CD8-positive, alpha-beta T cell (primary cell): ENCODE measurements at regions of chr17 and their contacts with region 1.

Region 1: DNA sequence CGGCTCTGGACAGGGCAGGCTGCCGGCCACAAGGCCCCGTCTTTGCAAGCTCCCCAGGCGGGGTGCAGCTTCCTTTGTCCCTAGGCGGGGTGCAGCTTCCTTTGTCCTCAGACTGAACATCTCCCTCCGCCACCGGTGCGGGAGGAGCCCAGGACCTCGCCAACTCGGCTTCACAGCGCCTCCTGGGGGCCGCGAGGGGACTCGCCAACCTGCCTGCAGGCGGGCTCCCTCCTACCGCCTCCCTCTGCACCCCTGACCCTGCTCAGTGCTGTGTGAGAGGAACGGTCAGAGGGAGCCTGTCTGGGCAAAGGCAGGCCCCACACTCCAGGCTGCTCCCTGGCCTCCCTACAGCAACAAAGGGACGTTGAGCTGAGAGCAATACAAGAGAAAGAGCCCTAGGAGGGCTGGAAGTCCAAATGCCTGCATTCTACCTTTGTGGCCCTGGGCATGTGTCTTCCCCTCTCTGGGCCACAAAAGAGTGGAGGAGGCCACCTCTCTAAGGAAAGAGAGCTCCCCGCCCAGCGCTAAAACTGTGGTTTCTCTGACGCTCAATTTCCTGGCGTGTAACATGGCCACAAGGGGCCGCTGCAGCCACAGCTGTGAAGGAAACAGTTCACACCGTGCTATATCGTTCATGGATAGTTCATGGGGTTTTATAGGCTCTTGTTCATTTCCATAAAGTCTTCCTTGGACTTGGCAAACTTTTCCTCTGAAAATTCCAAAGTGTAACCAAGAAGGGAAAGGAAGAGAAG is 20.9 kb upstream of the KRT19 start:
- DNase-seq: peak; percentile 72 to 90 (median 84)
- ATAC-seq: peak; percentile 87
- H3K4me3 ChIP-seq: peak overlapping the region; percentile 11 to 40
- H3K4me3 Mint-ChIP-seq: peak overlapping the region; percentile 54
- H3K27ac ChIP-seq: no peak overlapping the region
- H3K27ac Mint-ChIP-seq: no peak overlapping the region
- H3K4me1 ChIP-seq: peaks cover 14% of the 10 kb centered on the region
- H3K4me1 Mint-ChIP-seq: peaks cover 8% of the 10 kb centered on the region
- H3K27me3 ChIP-seq: no peaks in the 10 kb centered on the region
- H3K27me3 Mint-ChIP-seq: peaks cover 13% of the 10 kb centered on the region
- CTCF ChIP-seq: peak; percentile 82

Region 2: DNA sequence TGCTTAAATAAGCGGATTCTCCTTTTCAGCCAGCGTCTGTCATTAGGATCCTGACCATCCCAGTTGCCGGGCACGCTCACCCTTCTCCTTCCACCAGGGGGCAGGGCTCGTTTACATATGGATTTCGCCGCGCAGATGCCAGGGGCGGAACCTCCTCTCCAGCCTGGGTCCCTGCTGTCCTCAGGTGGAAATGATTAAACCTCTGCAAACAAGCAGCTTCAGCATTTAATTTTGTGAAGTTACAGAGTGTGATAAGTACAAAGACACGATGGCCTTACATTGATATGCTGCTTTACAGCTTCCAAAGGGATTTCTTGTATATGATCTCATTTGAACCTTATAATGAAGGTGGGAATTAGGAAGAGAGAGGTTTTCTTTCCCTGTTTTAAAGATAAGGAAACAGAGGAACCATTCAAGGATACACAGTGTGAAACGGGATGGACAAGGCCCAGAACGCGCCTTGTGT is 745.4 kb before region 1 on chr17:
- CTCF ChIA-PET with region 1: interaction called, 6 read pairs
- POLR2A ChIA-PET with region 1: no interaction called
- intact Hi-C with region 1: loop called (anchors 1 to 5 kb)
- DNase-seq: peak; percentile 50 to 82 (median 75)
- ATAC-seq: peak; percentile 92
- H3K4me3 ChIP-seq: no peak overlapping the region
- H3K4me3 Mint-ChIP-seq: no peak overlapping the region
- H3K27ac ChIP-seq: no peak overlapping the region
- H3K27ac Mint-ChIP-seq: no peak overlapping the region
- H3K4me1 ChIP-seq: no peaks in the 10 kb centered on the region
- H3K4me1 Mint-ChIP-seq: peaks cover 4% of the 10 kb centered on the region
- H3K27me3 ChIP-seq: peaks cover 0 to 4% of the 10 kb centered on the region in 2 experiments
- H3K27me3 Mint-ChIP-seq: peaks cover 44% of the 10 kb centered on the region
- CTCF ChIP-seq: peak; percentile 94

Region 3: GRCh38 chr17:40903129-40904065 is 645.6 kb before region 1 on chr17:
- CTCF ChIA-PET with region 1: interaction called, 59 read pairs
- POLR2A ChIA-PET with region 1: no interaction called
- intact Hi-C with region 1: no loop called
- DNase-seq: no peak
- ATAC-seq: no peak
- H3K4me3 ChIP-seq: no peak overlapping the region
- H3K4me3 Mint-ChIP-seq: no peak overlapping the region
- H3K27ac ChIP-seq: no peak overlapping the region
- H3K27ac Mint-ChIP-seq: no peak overlapping the region
- H3K4me1 ChIP-seq: no peaks in the 10 kb centered on the region
- H3K4me1 Mint-ChIP-seq: no peaks in the 10 kb centered on the region
- H3K27me3 ChIP-seq: peaks cover 0 to 7% of the 10 kb centered on the region in 2 experiments
- H3K27me3 Mint-ChIP-seq: peaks cover 47% of the 10 kb centered on the region
- CTCF ChIP-seq: no peak

Region 4: GRCh38 chr17:40915199-40915661 is 633.8 kb before region 1 on chr17:
- CTCF ChIA-PET with region 1: interaction called, 59 read pairs
- POLR2A ChIA-PET with region 1: no interaction called
- intact Hi-C with region 1: no loop called
- DNase-seq: peak in 1 of 9 experiments; percentile 11
- ATAC-seq: no peak
- H3K4me3 ChIP-seq: no peak overlapping the region
- H3K4me3 Mint-ChIP-seq: no peak overlapping the region
- H3K27ac ChIP-seq: no peak overlapping the region
- H3K27ac Mint-ChIP-seq: no peak overlapping the region
- H3K4me1 ChIP-seq: no peaks in the 10 kb centered on the region
- H3K4me1 Mint-ChIP-seq: no peaks in the 10 kb centered on the region
- H3K27me3 ChIP-seq: no peaks in the 10 kb centered on the region
- H3K27me3 Mint-ChIP-seq: no peaks in the 10 kb centered on the region
- CTCF ChIP-seq: no peak

Region 5: DNA sequence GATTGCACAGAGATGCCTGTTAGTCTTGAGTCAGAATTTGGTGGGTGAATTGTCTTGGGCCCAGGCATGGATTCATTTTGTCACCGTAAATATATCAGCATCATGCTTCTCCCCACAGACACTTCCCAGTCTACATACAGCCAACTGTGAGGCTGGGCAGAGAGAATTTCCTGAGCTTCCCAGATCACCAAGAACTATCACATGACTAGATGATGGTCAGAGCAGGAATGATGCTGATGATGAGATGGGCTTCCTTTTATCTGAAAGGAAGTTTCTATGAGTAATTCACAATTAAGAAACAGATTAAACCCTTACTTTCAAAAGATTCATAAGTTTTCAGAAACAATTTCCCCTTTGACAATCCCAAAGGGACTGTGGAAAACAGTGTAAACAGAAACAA is 294.2 kb before region 1 on chr17:
- CTCF ChIA-PET with region 1: no interaction called
- POLR2A ChIA-PET with region 1: no interaction called
- intact Hi-C with region 1: no loop called
- DNase-seq: no peak
- ATAC-seq: no peak
- H3K4me3 ChIP-seq: no peak overlapping the region
- H3K4me3 Mint-ChIP-seq: no peak overlapping the region
- H3K27ac ChIP-seq: no peak overlapping the region
- H3K27ac Mint-ChIP-seq: no peak overlapping the region
- H3K4me1 ChIP-seq: no peaks in the 10 kb centered on the region
- H3K4me1 Mint-ChIP-seq: no peaks in the 10 kb centered on the region
- H3K27me3 ChIP-seq: no peaks in the 10 kb centered on the region
- H3K27me3 Mint-ChIP-seq: peaks cover 7% of the 10 kb centered on the region
- CTCF ChIP-seq: no peak

Region 6: DNA sequence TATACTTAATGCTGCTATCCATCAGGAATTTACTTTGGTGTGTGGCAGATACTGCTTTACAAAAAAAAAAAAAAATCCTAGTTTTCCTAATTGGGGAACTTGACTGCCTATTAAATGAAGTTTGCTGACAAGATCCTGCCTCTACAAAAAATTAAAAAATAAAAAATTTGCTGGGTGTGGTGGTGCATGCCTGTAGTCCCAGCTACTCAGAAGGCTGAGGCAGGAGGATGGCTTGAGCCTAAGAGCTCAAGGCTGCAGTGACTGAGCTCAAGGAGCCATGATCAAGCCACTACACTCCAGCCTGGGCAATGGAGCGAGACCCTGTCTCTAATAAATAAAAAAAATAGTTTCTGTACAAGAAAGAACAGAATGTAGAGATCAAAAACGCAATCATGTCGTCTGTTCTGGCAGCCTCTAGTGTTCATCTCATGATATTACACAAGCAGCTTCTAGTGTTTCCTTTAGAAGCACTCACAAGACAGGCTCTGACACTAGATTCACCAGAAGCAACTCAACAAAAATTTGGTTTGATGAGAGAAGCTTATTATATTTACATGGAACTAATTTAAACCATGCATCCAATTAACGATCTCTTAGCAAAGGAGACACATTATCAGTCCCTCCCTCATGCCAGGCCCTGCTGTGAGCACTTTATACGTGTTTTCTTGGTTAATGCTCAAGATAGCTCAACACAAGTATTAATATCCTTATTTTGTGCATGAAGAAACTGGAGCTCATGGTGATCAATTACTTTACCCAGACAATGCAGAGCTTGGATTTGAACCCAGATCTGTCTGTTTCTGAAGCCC is 226.7 kb before region 1 on chr17:
- CTCF ChIA-PET with region 1: interaction called, 14 read pairs
- POLR2A ChIA-PET with region 1: no interaction called
- intact Hi-C with region 1: no loop called
- DNase-seq: peak in 4 of 9 experiments; percentile 29 to 75 (median 56)
- ATAC-seq: peak; percentile 86
- H3K4me3 ChIP-seq: no peak overlapping the region
- H3K4me3 Mint-ChIP-seq: no peak overlapping the region
- H3K27ac ChIP-seq: no peak overlapping the region
- H3K27ac Mint-ChIP-seq: peak overlapping the region; percentile 62
- H3K4me1 ChIP-seq: peaks cover 51% of the 10 kb centered on the region
- H3K4me1 Mint-ChIP-seq: peaks cover 47% of the 10 kb centered on the region
- H3K27me3 ChIP-seq: no peaks in the 10 kb centered on the region
- H3K27me3 Mint-ChIP-seq: no peaks in the 10 kb centered on the region
- CTCF ChIP-seq: peak; percentile 86

Region 7: GRCh38 chr17:41538565-41538991 is 10.4 kb before region 1 on chr17:
- CTCF ChIA-PET with region 1: interaction called, 32 read pairs
- POLR2A ChIA-PET with region 1: interaction called, 3 read pairs
- intact Hi-C with region 1: no loop called
- DNase-seq: no peak
- ATAC-seq: no peak
- H3K4me3 ChIP-seq: no peak overlapping the region
- H3K4me3 Mint-ChIP-seq: no peak overlapping the region
- H3K27ac ChIP-seq: no peak overlapping the region
- H3K27ac Mint-ChIP-seq: no peak overlapping the region
- H3K4me1 ChIP-seq: no peaks in the 10 kb centered on the region
- H3K4me1 Mint-ChIP-seq: no peaks in the 10 kb centered on the region
- H3K27me3 ChIP-seq: no peaks in the 10 kb centered on the region
- H3K27me3 Mint-ChIP-seq: peaks cover 10% of the 10 kb centered on the region
- CTCF ChIP-seq: no peak

Region 8: DNA sequence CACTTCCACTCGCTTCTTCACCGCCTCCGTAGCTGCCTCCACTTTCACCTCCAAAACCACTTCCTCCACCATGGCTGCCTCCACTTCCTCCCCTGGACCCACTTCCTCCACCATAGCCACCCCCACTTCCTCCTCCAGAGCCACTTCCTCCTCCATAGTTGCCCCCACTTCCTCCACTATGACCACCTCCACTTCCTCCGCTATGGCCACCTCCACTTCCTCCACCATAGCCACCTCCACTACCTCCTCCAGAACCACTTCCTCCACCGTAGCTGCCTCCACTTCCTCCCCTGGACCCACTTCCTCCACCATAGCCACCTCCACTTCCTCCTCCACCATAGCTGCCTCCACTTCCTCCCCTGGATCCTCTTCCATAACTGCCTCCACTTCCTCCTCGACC is 18.3 kb after region 1 on chr17:
- CTCF ChIA-PET with region 1: interaction called, 19 read pairs
- POLR2A ChIA-PET with region 1: interaction called, 3 read pairs
- intact Hi-C with region 1: no loop called
- DNase-seq: peak in 3 of 9 experiments; percentile 20 to 36 (median 30)
- ATAC-seq: no peak
- H3K4me3 ChIP-seq: no peak overlapping the region
- H3K4me3 Mint-ChIP-seq: no peak overlapping the region
- H3K27ac ChIP-seq: peak overlapping the region in 1 of 2 experiments; percentile 77
- H3K27ac Mint-ChIP-seq: peak overlapping the region; percentile 84
- H3K4me1 ChIP-seq: peaks cover 5% of the 10 kb centered on the region
- H3K4me1 Mint-ChIP-seq: peaks cover 12% of the 10 kb centered on the region
- H3K27me3 ChIP-seq: peaks cover 0 to 6% of the 10 kb centered on the region in 2 experiments
- H3K27me3 Mint-ChIP-seq: peaks cover 26% of the 10 kb centered on the region
- CTCF ChIP-seq: no peak

Region 9: GRCh38 chr17:41588126-41588810 is 39.2 kb after region 1 on chr17:
- CTCF ChIA-PET with region 1: no interaction called
- POLR2A ChIA-PET with region 1: no interaction called
- intact Hi-C with region 1: no loop called
- DNase-seq: no peak
- ATAC-seq: no peak
- H3K4me3 ChIP-seq: no peak overlapping the region
- H3K4me3 Mint-ChIP-seq: no peak overlapping the region
- H3K27ac ChIP-seq: no peak overlapping the region
- H3K27ac Mint-ChIP-seq: no peak overlapping the region
- H3K4me1 ChIP-seq: no peaks in the 10 kb centered on the region
- H3K4me1 Mint-ChIP-seq: no peaks in the 10 kb centered on the region
- H3K27me3 ChIP-seq: no peaks in the 10 kb centered on the region
- H3K27me3 Mint-ChIP-seq: peaks cover 19% of the 10 kb centered on the region
- CTCF ChIP-seq: no peak

Region 10: GRCh38 chr17:41724476-41725050 is 175.5 kb after region 1 on chr17:
- CTCF ChIA-PET with region 1: no interaction called
- POLR2A ChIA-PET with region 1: no interaction called
- intact Hi-C with region 1: no loop called
- DNase-seq: no peak
- ATAC-seq: no peak
- H3K4me3 ChIP-seq: no peak overlapping the region
- H3K4me3 Mint-ChIP-seq: no peak overlapping the region
- H3K27ac ChIP-seq: no peak overlapping the region
- H3K27ac Mint-ChIP-seq: no peak overlapping the region
- H3K4me1 ChIP-seq: no peaks in the 10 kb centered on the region
- H3K4me1 Mint-ChIP-seq: no peaks in the 10 kb centered on the region
- H3K27me3 ChIP-seq: no peaks in the 10 kb centered on the region
- H3K27me3 Mint-ChIP-seq: peaks cover 18% of the 10 kb centered on the region
- CTCF ChIP-seq: no peak

Region 11: GRCh38 chr17:41739661-41740352 is 190.8 kb after region 1 on chr17:
- CTCF ChIA-PET with region 1: no interaction called
- POLR2A ChIA-PET with region 1: no interaction called
- intact Hi-C with region 1: no loop called
- DNase-seq: no peak
- ATAC-seq: no peak
- H3K4me3 ChIP-seq: no peak overlapping the region
- H3K4me3 Mint-ChIP-seq: no peak overlapping the region
- H3K27ac ChIP-seq: no peak overlapping the region
- H3K27ac Mint-ChIP-seq: no peak overlapping the region
- H3K4me1 ChIP-seq: peaks cover 3% of the 10 kb centered on the region
- H3K4me1 Mint-ChIP-seq: peaks cover 3% of the 10 kb centered on the region
- H3K27me3 ChIP-seq: peaks cover 0 to 20% of the 10 kb centered on the region in 2 experiments
- H3K27me3 Mint-ChIP-seq: peaks cover 22% of the 10 kb centered on the region
- CTCF ChIP-seq: no peak